PC-9 (cell line): ENCODE measurements at regions of chr1 and their contacts with region 1.

Region 1: DNA sequence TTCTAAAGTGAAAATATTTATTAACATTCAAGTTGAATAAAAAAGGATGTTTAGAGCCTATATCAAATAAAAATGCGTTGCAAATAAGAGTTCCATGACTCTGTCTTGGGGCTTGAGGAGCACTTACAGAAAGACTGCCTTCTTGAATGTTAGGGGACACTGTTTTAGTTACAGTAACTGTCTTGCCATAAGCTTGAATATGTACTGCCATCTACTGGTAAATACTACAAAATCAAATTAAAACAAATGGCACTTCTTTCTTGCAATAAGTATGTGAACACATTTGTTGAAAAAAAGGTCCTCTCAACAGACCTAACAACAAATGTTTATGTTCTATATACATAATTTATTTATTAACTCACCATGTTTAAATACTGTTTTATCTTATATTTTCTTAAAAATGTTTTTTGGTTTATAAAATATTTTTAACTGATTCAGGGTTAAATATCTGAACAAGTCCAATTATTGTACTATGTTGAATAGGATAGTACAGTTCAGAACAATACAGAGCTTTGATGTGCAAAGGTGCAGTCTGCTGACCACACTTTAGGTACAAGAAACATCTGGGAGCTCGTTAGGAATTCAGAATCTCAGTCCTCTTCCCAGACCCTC is 199.5 kb downstream of the LRRIQ3 start:
- DNase-seq: peak in 1 of 2 experiments; percentile 44
- H3K4me3 ChIP-seq: no peak overlapping the region
- H3K27ac ChIP-seq: no peak overlapping the region
- H3K4me1 ChIP-seq: no peaks in the 10 kb centered on the region
- H3K27me3 ChIP-seq: no peaks in the 10 kb centered on the region
- CTCF ChIP-seq: peak; percentile 77

Region 2: GRCh38 chr1:73452522-73452921 is 545.9 kb before region 1 on chr1:
- CTCF ChIA-PET with region 1: no interaction called
- POLR2A ChIA-PET with region 1: no interaction called
- intact Hi-C with region 1: loop called (anchors 10 kb)
- DNase-seq: no peak
- H3K4me3 ChIP-seq: no peak overlapping the region
- H3K27ac ChIP-seq: no peak overlapping the region
- H3K4me1 ChIP-seq: no peaks in the 10 kb centered on the region
- H3K27me3 ChIP-seq: no peaks in the 10 kb centered on the region
- CTCF ChIP-seq: peak; percentile 48; the same call in 1 of the 2 replicates

Region 3: DNA sequence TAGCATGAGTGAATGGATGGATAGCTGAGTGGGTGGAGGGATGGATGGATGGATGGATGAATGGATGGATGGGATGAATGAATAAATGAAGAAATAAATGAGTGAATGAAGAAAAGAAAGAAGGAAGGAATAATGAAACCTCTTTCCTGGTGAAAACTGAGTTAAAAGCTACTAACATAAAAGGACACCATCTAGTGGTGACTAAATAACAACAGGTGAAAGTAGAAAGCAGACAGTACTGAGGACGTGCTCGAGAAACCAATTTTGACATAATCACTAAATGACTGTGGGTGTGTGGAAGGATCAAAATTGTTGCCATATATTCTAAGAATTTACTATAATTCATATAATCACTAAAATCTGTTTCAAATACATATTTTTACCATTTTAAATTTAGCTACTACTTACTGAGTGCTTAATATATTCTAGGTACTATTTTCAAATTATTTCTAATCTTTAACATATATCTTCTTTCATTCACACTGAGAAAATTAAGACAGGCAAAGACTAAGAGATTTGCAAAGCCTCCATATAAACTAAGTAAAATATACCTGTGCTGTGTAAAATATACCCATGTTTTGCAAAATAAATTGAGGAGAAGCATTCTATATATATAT is 323.4 kb before region 1 on chr1:
- CTCF ChIA-PET with region 1: no interaction called
- POLR2A ChIA-PET with region 1: no interaction called
- intact Hi-C with region 1: loop called (anchors 5 kb)
- DNase-seq: no peak
- H3K4me3 ChIP-seq: no peak overlapping the region
- H3K27ac ChIP-seq: no peak overlapping the region
- H3K4me1 ChIP-seq: no peaks in the 10 kb centered on the region; the same call in 1 of the 2 replicates
- H3K27me3 ChIP-seq: no peaks in the 10 kb centered on the region
- CTCF ChIP-seq: peak; percentile 75

Region 4: GRCh38 chr1:73839922-73840321 is 158.5 kb before region 1 on chr1:
- CTCF ChIA-PET with region 1: no interaction called
- POLR2A ChIA-PET with region 1: no interaction called
- intact Hi-C with region 1: loop called (anchors 10 kb)
- DNase-seq: no peak
- H3K4me3 ChIP-seq: no peak overlapping the region
- H3K27ac ChIP-seq: no peak overlapping the region
- H3K4me1 ChIP-seq: no peaks in the 10 kb centered on the region
- H3K27me3 ChIP-seq: no peaks in the 10 kb centered on the region
- CTCF ChIP-seq: peak; percentile 82